H1 (cell line): ENCODE measurements at regions of chr12 and their contacts with region 1.

Region 1: GRCh38 chr12:6540181-6540877 is 6.0 kb downstream of the GAPDH start:
- DNase-seq: peak in 1 of 2 experiments; percentile 87
- H3K4me3 ChIP-seq: peak overlapping the region in 1 of 4 experiments; percentile 4; a peak in 2 of 8 replicates
- H3K27ac ChIP-seq: no peak overlapping the region
- H3K4me1 ChIP-seq: peaks cover 0 to 12% (median 10%) of the 10 kb centered on the region in 4 experiments; a peak in 5 of 7 replicates
- H3K27me3 ChIP-seq: no peaks in the 10 kb centered on the region
- CTCF ChIP-seq: no peak
- EP300 ChIP-seq: no peak
- POLR2A ChIP-seq: peak in 1 of 2 experiments; percentile 45; a peak in 1 of 3 replicates
- RAD21 ChIP-seq: no peak

Region 2: GRCh38 chr12:6376079-6376869 is 164.1 kb before region 1 on chr12:
- CTCF ChIA-PET with region 1: interaction called, 3 read pairs
- POLR2A ChIA-PET with region 1: interaction called, 37 read pairs
- DNase-seq: peak; percentile 54 to 74
- H3K4me3 ChIP-seq: peak overlapping the region; percentile 64 to 84 (median 74)
- H3K27ac ChIP-seq: peak overlapping the region; percentile 92
- H3K4me1 ChIP-seq: peaks cover 5 to 47% (median 33%) of the 10 kb centered on the region in 4 experiments
- H3K27me3 ChIP-seq: peaks cover 0 to 2% (median 0%) of the 10 kb centered on the region in 4 experiments; a peak in 2 of 7 replicates
- CTCF ChIP-seq: peak in 2 of 3 experiments; percentile 41 to 58; a peak in 3 of 4 replicates
- EP300 ChIP-seq: no peak
- POLR2A ChIP-seq: peak in 1 of 2 experiments; percentile 69; a peak in 2 of 3 replicates
- RAD21 ChIP-seq: peak; percentile 30 to 55

Region 3: GRCh38 chr12:6493497-6494257 is 46.7 kb before region 1 on chr12 and contains the start of gene NCAPD2:
- CTCF ChIA-PET with region 1: interaction called, 6 read pairs
- POLR2A ChIA-PET with region 1: interaction called, 38 read pairs
- DNase-seq: peak; percentile 86 to 91
- H3K4me3 ChIP-seq: peak within 1 kb of the TSS; percentile 84 to 98 (median 90)
- H3K27ac ChIP-seq: peak within 1 kb of the TSS; percentile 81
- H3K4me1 ChIP-seq: peaks cover 0 to 6% (median 4%) of the 10 kb centered on the region in 4 experiments; a peak in 4 of 7 replicates
- H3K27me3 ChIP-seq: no peaks in the 10 kb centered on the region
- CTCF ChIP-seq: peak in 2 of 3 experiments; percentile 12 to 19; a peak in 2 of 4 replicates
- EP300 ChIP-seq: no peak
- POLR2A ChIP-seq: peak; percentile 72 to 76
- RAD21 ChIP-seq: no peak; a peak in 1 of 4 replicates
- total RNA-seq, gene NCAPD2: 129 and 132 TPM in 2 replicates

Region 4: DNA sequence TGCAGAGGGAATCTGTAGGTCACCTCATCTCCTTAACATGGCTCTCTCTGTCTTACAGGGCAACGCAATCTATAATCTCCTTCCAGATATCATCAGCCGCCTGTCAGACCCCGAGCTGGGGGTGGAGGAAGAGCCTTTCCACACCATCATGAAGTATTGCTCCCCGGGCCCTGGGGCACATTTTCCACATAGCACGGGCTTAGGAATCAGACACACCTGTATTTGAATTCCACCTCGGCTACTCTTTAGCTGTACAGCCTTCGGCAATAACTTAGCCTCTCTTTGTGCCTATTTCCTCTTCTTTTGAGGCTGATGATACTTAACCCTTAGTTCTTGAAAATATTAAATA is 11.5 kb before region 1 on chr12:
- CTCF ChIA-PET with region 1: interaction called, 462 read pairs
- POLR2A ChIA-PET with region 1: interaction called, 665 read pairs
- DNase-seq: no peak
- H3K4me3 ChIP-seq: no peak overlapping the region
- H3K27ac ChIP-seq: 0 out of 2 replicates have a peak overlapping the region, but pooled peaks have one; percentile 18
- H3K4me1 ChIP-seq: peaks cover 0 to 14% (median 12%) of the 10 kb centered on the region in 4 experiments; a peak in 5 of 7 replicates
- H3K27me3 ChIP-seq: no peaks in the 10 kb centered on the region
- CTCF ChIP-seq: no peak
- EP300 ChIP-seq: no peak
- POLR2A ChIP-seq: no peak
- RAD21 ChIP-seq: no peak

Region 5: GRCh38 chr12:6592087-6592486 is 51.8 kb after region 1 on chr12:
- CTCF ChIA-PET with region 1: interaction called, 6 read pairs
- POLR2A ChIA-PET with region 1: interaction called, 14 read pairs
- DNase-seq: no peak
- H3K4me3 ChIP-seq: no peak overlapping the region
- H3K27ac ChIP-seq: no peak overlapping the region
- H3K4me1 ChIP-seq: no peaks in the 10 kb centered on the region
- H3K27me3 ChIP-seq: no peaks in the 10 kb centered on the region
- CTCF ChIP-seq: no peak
- EP300 ChIP-seq: no peak
- POLR2A ChIP-seq: no peak
- RAD21 ChIP-seq: no peak

Region 6: GRCh38 chr12:6613776-6614512 is 73.6 kb after region 1 on chr12:
- CTCF ChIA-PET with region 1: interaction called, 3 read pairs
- POLR2A ChIA-PET with region 1: interaction called, 13 read pairs
- DNase-seq: peak; percentile 82 to 86
- H3K4me3 ChIP-seq: peak overlapping the region in 2 of 4 experiments; percentile 0 to 32; a peak in 1 of 8 replicates
- H3K27ac ChIP-seq: peak overlapping the region; percentile 44; the same call in 1 of the 2 replicates
- H3K4me1 ChIP-seq: peaks cover 15 to 21% (median 17%) of the 10 kb centered on the region in 4 experiments
- H3K27me3 ChIP-seq: peaks cover 0 to 3% (median 1%) of the 10 kb centered on the region in 4 experiments; a peak in 2 of 7 replicates
- CTCF ChIP-seq: peak; percentile 27 to 63 (median 34); a peak in 3 of 4 replicates
- EP300 ChIP-seq: no peak
- POLR2A ChIP-seq: no peak
- RAD21 ChIP-seq: peak in 1 of 2 experiments; percentile 10; a peak in 1 of 4 replicates

Region 7: GRCh38 chr12:6676962-6677361 is 136.6 kb after region 1 on chr12:
- CTCF ChIA-PET with region 1: no interaction called
- POLR2A ChIA-PET with region 1: no interaction called
- DNase-seq: no peak
- H3K4me3 ChIP-seq: no peak overlapping the region
- H3K27ac ChIP-seq: no peak overlapping the region
- H3K4me1 ChIP-seq: no peaks in the 10 kb centered on the region
- H3K27me3 ChIP-seq: no peaks in the 10 kb centered on the region
- CTCF ChIP-seq: no peak
- EP300 ChIP-seq: no peak
- POLR2A ChIP-seq: no peak
- RAD21 ChIP-seq: no peak

Region 8: GRCh38 chr12:7019043-7019569 is 478.8 kb after region 1 on chr12:
- CTCF ChIA-PET with region 1: no interaction called
- POLR2A ChIA-PET with region 1: no interaction called
- DNase-seq: no peak
- H3K4me3 ChIP-seq: peak overlapping the region; percentile 74 to 91 (median 80)
- H3K27ac ChIP-seq: no peak overlapping the region
- H3K4me1 ChIP-seq: peaks cover 0 to 3% (median under 1%) of the 10 kb centered on the region in 4 experiments; a peak in 2 of 7 replicates
- H3K27me3 ChIP-seq: no peaks in the 10 kb centered on the region
- CTCF ChIP-seq: no peak
- EP300 ChIP-seq: no peak
- POLR2A ChIP-seq: no peak
- RAD21 ChIP-seq: no peak